Activated CD4-positive, alpha-beta T cell treated with anti-CD3 and anti-CD28 coated beads for 36 hours (primary cell): ENCODE measurements at regions of chr4 and their contacts with region 1.

Region 1: DNA sequence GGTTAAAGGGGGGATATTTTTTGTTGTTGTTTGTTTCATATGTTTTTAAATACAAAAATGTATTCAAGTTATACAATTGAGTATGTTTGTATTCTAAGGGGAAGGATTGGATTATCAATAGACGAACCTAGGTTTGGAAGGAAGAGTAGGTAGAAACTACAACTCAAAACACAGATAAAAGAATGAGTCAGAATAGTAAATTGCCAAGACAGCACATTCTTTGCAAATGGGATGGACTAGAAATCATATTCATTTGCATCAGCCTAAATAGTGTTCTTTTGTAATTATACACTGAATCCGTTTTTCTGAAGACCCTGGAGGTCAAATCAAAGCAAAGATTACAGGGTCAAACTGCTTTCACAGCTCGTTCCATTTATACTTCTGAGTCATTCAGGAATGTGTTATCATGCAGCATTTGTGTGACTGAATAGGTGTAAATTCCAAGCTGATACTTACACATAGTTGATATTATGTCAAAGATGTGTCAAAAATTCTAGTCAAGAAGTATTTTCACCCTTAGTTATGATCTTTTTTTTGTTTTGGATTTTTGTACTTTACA is 273.3 kb upstream of the FAT4 start:
- DNase-seq: no peak
- ATAC-seq: no peak
- H3K4me3 Mint-ChIP-seq: no peak overlapping the region
- H3K27ac Mint-ChIP-seq: no peak overlapping the region
- H3K4me1 Mint-ChIP-seq: no peaks in the 10 kb centered on the region
- H3K27me3 Mint-ChIP-seq: no peaks in the 10 kb centered on the region

Region 2: GRCh38 chr4:124868495-124868894 is 173.0 kb before region 1 on chr4:
- CTCF ChIA-PET with region 1: no interaction called
- POLR2A ChIA-PET with region 1: no interaction called
- intact Hi-C with region 1: no loop called
- DNase-seq: no peak
- ATAC-seq: no peak
- H3K4me3 Mint-ChIP-seq: no peak overlapping the region
- H3K27ac Mint-ChIP-seq: no peak overlapping the region
- H3K4me1 Mint-ChIP-seq: no peaks in the 10 kb centered on the region
- H3K27me3 Mint-ChIP-seq: no peaks in the 10 kb centered on the region

Region 3: DNA sequence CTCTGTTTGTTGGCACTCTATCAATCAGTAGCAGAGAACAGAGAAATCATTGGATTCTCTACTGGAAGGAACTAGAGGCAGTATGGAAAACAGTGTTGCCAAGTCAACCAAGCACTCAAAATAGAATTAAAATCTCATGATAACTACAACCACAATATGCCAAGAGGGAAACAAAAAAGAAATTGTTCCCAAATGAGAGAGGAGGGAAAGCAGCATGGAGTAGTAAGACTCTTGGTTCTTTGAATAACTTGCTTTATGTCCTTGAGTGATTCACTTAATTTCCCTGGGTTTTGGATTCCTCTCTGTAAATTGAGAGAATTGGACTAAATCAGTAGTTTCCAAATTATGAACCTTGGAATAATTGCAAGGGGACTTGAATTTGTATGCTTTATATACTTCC is 43.5 kb before region 1 on chr4:
- CTCF ChIA-PET with region 1: no interaction called
- POLR2A ChIA-PET with region 1: no interaction called
- intact Hi-C with region 1: loop called in 1 of 2 experiments (anchors 1 kb)
- DNase-seq: no peak
- ATAC-seq: no peak
- H3K4me3 Mint-ChIP-seq: no peak overlapping the region
- H3K27ac Mint-ChIP-seq: no peak overlapping the region
- H3K4me1 Mint-ChIP-seq: no peaks in the 10 kb centered on the region
- H3K27me3 Mint-ChIP-seq: no peaks in the 10 kb centered on the region